ENCODE measurements at regions of chr13 and their contacts with region 1.

Region 1: DNA sequence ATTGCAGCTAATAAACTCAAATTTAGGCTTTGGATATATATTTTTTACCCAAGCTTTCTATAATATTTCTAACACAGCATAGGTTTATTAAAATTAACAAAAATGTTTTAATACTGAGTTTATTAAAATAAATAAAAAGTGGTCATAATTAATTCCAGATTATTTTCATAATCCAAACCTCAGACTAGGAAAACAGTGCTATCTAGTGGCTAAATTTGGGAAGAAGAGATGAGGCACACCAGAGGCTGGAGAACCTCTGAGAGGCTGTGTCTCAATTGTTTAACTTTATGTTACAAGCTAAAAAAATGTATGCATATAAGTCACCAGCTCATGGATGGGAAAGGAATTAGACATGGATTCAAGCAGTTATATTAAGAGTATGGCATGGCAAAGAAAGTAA is 392.5 kb downstream of the DIAPH3 start:
- DNase-seq: no peak
- H3K4me3 ChIP-seq: no peak overlapping the region
- H3K27ac ChIP-seq: no peak overlapping the region
- H3K27me3 ChIP-seq: no peaks in the 10 kb centered on the region
- CTCF ChIP-seq: peak; percentile 81

Region 2: GRCh38 chr13:59677966-59678814 is 93.1 kb before region 1 on chr13:
- CTCF ChIA-PET with region 1: interaction called, 196 read pairs
- POLR2A ChIA-PET with region 1: no interaction called
- DNase-seq: peak; percentile 43
- H3K4me3 ChIP-seq: no peak overlapping the region
- H3K27ac ChIP-seq: no peak overlapping the region
- H3K27me3 ChIP-seq: no peaks in the 10 kb centered on the region
- CTCF ChIP-seq: peak; percentile 93

Region 3: GRCh38 chr13:59721926-59722910 is 49.1 kb before region 1 on chr13:
- CTCF ChIA-PET with region 1: interaction called, 10 read pairs
- POLR2A ChIA-PET with region 1: no interaction called
- DNase-seq: no peak
- H3K4me3 ChIP-seq: no peak overlapping the region
- H3K27ac ChIP-seq: no peak overlapping the region
- H3K27me3 ChIP-seq: no peaks in the 10 kb centered on the region
- CTCF ChIP-seq: no peak

Region 4: DNA sequence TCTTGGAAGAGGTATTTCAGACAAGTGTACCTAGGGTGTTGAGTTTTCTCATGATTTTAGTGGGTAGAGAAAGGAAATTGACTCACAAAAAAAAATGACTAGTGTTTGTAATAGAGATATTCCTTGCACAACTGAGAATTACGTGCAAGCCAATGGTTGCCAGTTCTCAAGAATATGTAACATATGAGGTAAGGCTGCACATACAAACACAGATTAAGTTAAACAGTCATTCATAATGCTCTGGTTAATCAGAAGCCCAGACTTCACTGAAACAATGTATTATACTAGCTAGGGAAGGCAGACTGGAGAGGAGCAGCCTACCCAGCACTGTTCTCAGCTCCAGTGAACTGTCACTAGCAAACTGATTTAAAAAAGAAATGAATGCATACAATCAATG is 25.9 kb before region 1 on chr13:
- CTCF ChIA-PET with region 1: interaction called, 18 read pairs
- POLR2A ChIA-PET with region 1: no interaction called
- DNase-seq: peak; percentile 23
- H3K4me3 ChIP-seq: no peak overlapping the region
- H3K27ac ChIP-seq: no peak overlapping the region
- H3K27me3 ChIP-seq: no peaks in the 10 kb centered on the region
- CTCF ChIP-seq: no peak

Region 5: GRCh38 chr13:59790626-59791025 is 19.4 kb after region 1 on chr13:
- CTCF ChIA-PET with region 1: interaction called, 10 read pairs
- POLR2A ChIA-PET with region 1: no interaction called
- DNase-seq: no peak
- H3K4me3 ChIP-seq: no peak overlapping the region
- H3K27ac ChIP-seq: no peak overlapping the region
- H3K27me3 ChIP-seq: no peaks in the 10 kb centered on the region
- CTCF ChIP-seq: no peak

Region 6: GRCh38 chr13:60335531-60335930 is 564.3 kb after region 1 on chr13:
- CTCF ChIA-PET with region 1: interaction called, 11 read pairs
- POLR2A ChIA-PET with region 1: no interaction called
- DNase-seq: no peak
- H3K4me3 ChIP-seq: no peak overlapping the region
- H3K27ac ChIP-seq: no peak overlapping the region
- H3K27me3 ChIP-seq: no peaks in the 10 kb centered on the region
- CTCF ChIP-seq: peak; percentile 62

Measured in AG04450 (cell line).